Caco-2 (cell line): ENCODE measurements at regions of chr3 and their contacts with region 1.

Region 1: GRCh38 chr3:47380601-47381316 is at the start of gene PTPN23:
- DNase-seq: peak; percentile 98 to 99
- H3K4me3 ChIP-seq: peak within 1 kb of the TSS; percentile 76
- H3K4me3 Mint-ChIP-seq: peak within 1 kb of the TSS; percentile 89
- H3K27ac Mint-ChIP-seq: peak within 1 kb of the TSS; percentile 97
- H3K4me1 ChIP-seq: peaks cover 25% of the 10 kb centered on the region
- H3K4me1 Mint-ChIP-seq: peaks cover 25% of the 10 kb centered on the region
- H3K27me3 ChIP-seq: no peaks in the 10 kb centered on the region
- H3K27me3 Mint-ChIP-seq: no peaks in the 10 kb centered on the region
- CTCF ChIP-seq: no peak
- total RNA-seq, gene PTPN23: 46.8 and 49.6 TPM in 2 replicates

Region 2: GRCh38 chr3:47365213-47366153 is 15.3 kb before region 1 on chr3:
- CTCF ChIA-PET with region 1: no interaction called
- POLR2A ChIA-PET with region 1: interaction called, 11 read pairs
- intact Hi-C with region 1: no loop called
- DNase-seq: peak in 1 of 2 experiments; percentile 3
- H3K4me3 ChIP-seq: no peak overlapping the region
- H3K4me3 Mint-ChIP-seq: no peak overlapping the region
- H3K27ac Mint-ChIP-seq: no peak overlapping the region
- H3K4me1 ChIP-seq: no peaks in the 10 kb centered on the region
- H3K4me1 Mint-ChIP-seq: peaks cover 6% of the 10 kb centered on the region
- H3K27me3 ChIP-seq: no peaks in the 10 kb centered on the region
- H3K27me3 Mint-ChIP-seq: no peaks in the 10 kb centered on the region
- CTCF ChIP-seq: no peak

Region 3: DNA sequence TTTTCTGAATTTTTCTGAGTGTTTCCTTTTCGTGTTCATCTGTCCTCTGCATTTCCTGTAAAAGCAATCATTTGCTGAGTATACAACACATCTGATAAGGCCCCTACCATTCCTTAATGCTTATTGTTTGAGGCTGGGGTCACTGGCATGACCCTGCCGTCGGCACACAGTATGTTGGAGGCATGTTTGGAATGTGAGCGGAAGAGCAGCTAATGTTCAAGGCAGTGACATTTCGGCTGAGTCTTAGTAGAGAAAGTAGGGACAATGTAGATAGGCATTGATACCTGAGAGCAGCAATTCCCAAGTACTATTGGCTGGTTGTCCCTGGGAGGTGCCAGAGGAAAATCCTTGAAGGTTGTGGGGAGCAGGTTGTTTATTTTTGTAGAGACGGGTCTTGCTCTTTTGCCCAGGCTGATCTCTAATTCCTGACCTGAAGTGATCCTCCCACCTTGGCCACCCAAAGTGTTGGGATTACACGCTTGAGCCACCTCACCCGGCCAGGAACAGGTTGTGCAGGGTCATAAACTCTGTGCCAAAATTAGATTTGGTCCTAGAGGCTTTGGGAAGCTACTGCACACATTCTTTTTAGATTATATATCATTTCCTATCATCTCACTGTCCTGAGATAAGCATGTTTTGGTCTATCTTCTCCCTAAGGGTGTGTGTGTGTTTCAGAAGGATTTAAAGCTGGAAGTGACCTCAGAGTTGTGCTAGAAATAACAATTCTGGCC is 13.5 kb after region 1 on chr3:
- CTCF ChIA-PET with region 1: interaction called, 5 read pairs
- POLR2A ChIA-PET with region 1: interaction called, 15 read pairs
- intact Hi-C with region 1: loop called (anchors 1 kb)
- DNase-seq: peak; percentile 82 to 87
- H3K4me3 ChIP-seq: peak overlapping the region; percentile 5; the same call in 1 of the 2 replicates
- H3K4me3 Mint-ChIP-seq: peak overlapping the region; percentile 69
- H3K27ac Mint-ChIP-seq: peak overlapping the region; percentile 90
- H3K4me1 ChIP-seq: peaks cover 33% of the 10 kb centered on the region
- H3K4me1 Mint-ChIP-seq: peaks cover 17% of the 10 kb centered on the region
- H3K27me3 ChIP-seq: no peaks in the 10 kb centered on the region
- H3K27me3 Mint-ChIP-seq: no peaks in the 10 kb centered on the region
- CTCF ChIP-seq: peak in 1 of 2 experiments; percentile 42

Region 4: DNA sequence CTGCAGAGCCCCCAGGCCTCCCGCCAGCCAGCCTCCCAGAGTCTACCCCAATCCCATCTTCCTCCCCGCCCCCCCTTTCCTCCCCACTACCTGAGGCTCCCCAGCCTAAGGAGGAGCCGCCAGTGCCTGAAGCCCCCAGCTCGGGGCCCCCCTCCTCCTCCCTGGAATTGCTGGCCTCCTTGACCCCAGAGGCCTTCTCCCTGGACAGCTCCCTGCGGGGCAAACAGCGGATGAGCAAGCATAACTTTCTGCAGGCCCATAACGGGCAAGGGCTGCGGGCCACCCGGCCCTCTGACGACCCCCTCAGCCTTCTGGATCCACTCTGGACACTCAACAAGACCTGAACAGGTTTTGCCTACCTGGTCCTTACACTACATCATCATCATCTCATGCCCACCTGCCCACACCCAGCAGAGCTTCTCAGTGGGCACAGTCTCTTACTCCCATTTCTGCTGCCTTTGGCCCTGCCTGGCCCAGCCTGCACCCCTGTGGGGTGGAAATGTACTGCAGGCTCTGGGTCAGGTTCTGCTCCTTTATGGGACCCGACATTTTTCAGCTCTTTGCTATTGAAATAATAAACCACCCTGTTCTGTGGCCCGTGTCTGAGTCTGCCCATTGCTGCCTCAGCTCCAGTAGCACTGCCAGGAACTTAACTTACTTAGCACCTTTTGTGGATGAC is 32.2 kb after region 1 on chr3:
- CTCF ChIA-PET with region 1: no interaction called
- POLR2A ChIA-PET with region 1: no interaction called
- intact Hi-C with region 1: no loop called
- DNase-seq: no peak
- H3K4me3 ChIP-seq: no peak overlapping the region
- H3K4me3 Mint-ChIP-seq: peak overlapping the region; percentile 45
- H3K27ac Mint-ChIP-seq: peak overlapping the region; percentile 81
- H3K4me1 ChIP-seq: peaks cover 4% of the 10 kb centered on the region; the same call in 1 of the 2 replicates
- H3K4me1 Mint-ChIP-seq: peaks cover 6% of the 10 kb centered on the region
- H3K27me3 ChIP-seq: no peaks in the 10 kb centered on the region
- H3K27me3 Mint-ChIP-seq: no peaks in the 10 kb centered on the region
- CTCF ChIP-seq: no peak